ENCODE measurements at regions of chr17 and their contacts with region 1.

Region 1: DNA sequence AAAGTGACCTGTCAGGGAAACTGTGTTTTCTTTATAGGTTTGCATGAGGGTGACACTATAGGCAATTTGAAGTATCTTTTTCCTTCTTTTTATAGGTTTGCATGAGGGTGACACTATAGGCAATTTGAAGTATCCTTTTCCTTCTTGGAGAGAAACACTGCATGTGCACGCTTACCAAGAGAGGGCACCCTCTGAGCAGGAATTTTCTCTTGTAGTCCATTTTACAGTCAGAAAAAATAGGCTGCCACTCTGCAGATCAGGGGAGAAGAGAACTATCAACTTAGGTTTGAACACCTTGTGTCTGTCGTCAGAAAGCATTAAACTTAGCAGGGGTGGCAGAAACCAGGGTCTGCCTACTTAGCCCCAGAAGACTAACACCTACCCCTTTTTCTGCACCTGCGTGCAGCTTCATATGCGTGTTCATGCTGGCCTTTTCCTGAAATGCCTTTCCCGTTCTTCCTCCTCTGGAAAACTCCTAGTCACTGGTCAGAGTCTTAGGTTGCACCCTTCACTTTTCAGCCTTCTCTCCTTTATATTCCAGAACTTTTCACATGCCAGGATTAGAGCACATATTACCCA is 16.4 kb upstream of the SMIM36 start:
- DNase-seq: peak; percentile 18 to 24
- ATAC-seq: peak; percentile 57 to 66
- H3K4me3 ChIP-seq: no peak overlapping the region
- H3K27ac ChIP-seq: no peak overlapping the region
- H3K4me1 ChIP-seq: no peaks in the 10 kb centered on the region
- H3K27me3 ChIP-seq: no peaks in the 10 kb centered on the region
- CTCF ChIP-seq: peak; percentile 15 to 56 (median 51)
- POLR2A ChIP-seq: no peak

Region 2: DNA sequence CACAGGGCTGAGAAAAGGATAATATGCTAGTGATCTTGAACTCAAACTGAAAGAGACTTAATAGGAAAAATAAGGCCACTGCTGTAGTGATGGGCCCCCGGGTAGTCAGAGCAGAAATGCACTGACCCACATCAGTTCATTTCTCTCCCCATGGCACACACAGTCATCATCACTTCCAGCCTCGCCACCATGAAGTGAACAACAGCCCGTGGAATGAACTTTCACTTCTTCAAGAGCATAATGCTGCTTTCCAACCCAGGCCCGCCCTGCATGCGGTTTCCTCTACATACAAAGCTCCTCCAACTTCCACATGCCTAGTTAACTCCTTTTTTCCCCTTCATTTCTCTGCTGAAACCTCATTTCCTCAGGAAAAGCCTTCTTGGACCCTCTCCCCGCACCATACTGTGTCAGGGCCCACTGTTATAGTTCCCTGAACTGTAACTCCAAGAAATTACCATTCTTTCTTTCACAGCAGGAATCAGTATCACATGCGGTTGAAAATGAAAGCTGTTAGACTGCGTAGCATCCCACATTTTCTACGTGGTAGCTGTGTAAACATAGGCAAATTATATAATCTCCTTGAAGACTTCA is 49.5 kb after region 1 on chr17:
- in situ Hi-C with region 1: no loop called
- intact Hi-C with region 1: no loop called
- DNase-seq: peak; percentile 6 to 29
- ATAC-seq: peak; percentile 56 to 61
- H3K4me3 ChIP-seq: peak overlapping the region; percentile 36 to 42 (median 40)
- H3K27ac ChIP-seq: peak overlapping the region; percentile 56 to 72 (median 62)
- H3K4me1 ChIP-seq: peaks cover 0 to 5% of the 10 kb centered on the region in 2 donors
- H3K27me3 ChIP-seq: no peaks in the 10 kb centered on the region
- CTCF ChIP-seq: no peak
- POLR2A ChIP-seq: no peak

Region 3: DNA sequence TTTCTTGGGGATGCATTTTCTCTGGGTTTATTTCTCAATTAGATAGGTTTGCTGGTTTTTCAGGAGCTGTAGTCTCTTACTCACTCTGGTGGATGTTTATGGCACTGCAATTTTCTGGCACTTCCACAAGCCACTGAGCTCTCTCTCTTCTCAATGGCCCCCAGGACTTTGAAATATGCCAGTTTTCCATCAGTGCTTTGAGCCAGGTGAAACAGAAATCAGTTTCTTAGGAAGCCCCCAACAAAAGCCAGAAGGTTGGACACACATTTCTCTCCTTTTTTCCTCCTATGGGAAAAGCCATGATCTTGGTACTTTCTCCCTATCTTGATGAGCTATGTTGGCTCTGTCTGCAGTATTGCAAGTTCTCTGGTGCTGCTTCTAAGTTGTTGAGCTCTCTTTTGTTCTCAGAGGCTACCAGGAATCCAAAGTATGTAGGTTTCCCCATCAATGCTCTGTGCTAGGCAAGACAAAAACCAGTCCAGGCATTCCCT is 74.3 kb after region 1 on chr17:
- in situ Hi-C with region 1: loop called in 1 of 4 experiments (anchors 5 kb)
- intact Hi-C with region 1: loop called (anchors 5 kb)
- DNase-seq: no peak
- ATAC-seq: no peak
- H3K4me3 ChIP-seq: no peak overlapping the region
- H3K27ac ChIP-seq: no peak overlapping the region
- H3K4me1 ChIP-seq: peaks cover 0 to 6% of the 10 kb centered on the region in 2 donors
- H3K27me3 ChIP-seq: no peaks in the 10 kb centered on the region
- CTCF ChIP-seq: peak in 4 of 5 experiments; percentile 27 to 54 (median 36)
- POLR2A ChIP-seq: no peak

Region 4: DNA sequence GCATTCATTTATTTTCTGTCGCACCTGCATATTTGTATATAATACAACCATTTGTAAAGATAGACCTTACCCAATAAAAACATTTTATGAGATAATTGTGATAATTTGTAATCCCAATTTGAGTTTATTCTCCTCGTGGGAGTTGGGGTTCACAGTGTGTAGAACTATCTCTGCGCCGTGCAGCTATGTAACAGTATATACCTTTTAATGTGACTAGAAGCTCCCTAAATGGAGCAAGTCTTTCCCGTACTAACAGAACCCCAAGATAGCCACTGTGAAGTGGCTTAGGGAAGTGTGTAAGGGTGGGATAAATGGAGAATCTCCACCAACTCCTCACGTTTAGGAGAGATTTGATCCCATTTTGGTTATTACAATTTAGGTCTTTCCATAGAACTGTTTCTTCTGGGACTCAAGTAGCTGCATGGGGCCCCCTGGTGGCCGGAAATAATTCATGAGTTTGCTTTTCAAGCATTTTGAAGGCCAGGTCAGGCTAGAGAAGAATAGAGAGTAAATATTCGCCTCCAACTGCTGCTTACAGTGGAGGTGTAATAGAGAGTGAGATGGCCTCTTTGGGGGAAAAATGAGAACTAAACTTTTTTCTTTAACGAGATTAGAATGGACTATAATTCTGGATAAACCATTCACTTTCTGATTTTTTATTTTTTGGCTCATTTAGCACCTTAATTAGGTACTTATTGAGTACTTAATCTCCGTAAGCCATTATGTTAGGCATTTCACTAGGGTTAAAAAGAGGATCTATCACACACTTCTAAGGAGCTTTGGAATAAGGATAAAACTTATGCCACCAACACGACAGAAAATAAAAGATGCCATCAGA is 190.5 kb after region 1 on chr17:
- in situ Hi-C with region 1: loop called (anchors 5 kb)
- intact Hi-C with region 1: loop called (anchors 1 kb)
- DNase-seq: peak; percentile 51 to 78
- ATAC-seq: peak; percentile 58 to 64
- H3K4me3 ChIP-seq: no peak overlapping the region
- H3K27ac ChIP-seq: no peak overlapping the region
- H3K4me1 ChIP-seq: peaks cover 5 to 7% of the 10 kb centered on the region in 2 donors
- H3K27me3 ChIP-seq: no peaks in the 10 kb centered on the region
- CTCF ChIP-seq: peak; percentile 52 to 91 (median 81)
- POLR2A ChIP-seq: no peak

Region 5: GRCh38 chr17:55825213-55825612 is 297.6 kb after region 1 on chr17:
- in situ Hi-C with region 1: loop called in 1 of 4 experiments (anchors 5 kb)
- intact Hi-C with region 1: loop called (anchors 1 kb)
- DNase-seq: no peak
- ATAC-seq: peak in 1 of 2 donors; percentile 66
- H3K4me3 ChIP-seq: no peak overlapping the region
- H3K27ac ChIP-seq: no peak overlapping the region
- H3K4me1 ChIP-seq: no peaks in the 10 kb centered on the region
- H3K27me3 ChIP-seq: no peaks in the 10 kb centered on the region
- CTCF ChIP-seq: peak in 4 of 5 experiments; percentile 16 to 61 (median 47)
- POLR2A ChIP-seq: no peak

Region 6: GRCh38 chr17:56441331-56441730 is 913.7 kb after region 1 on chr17:
- in situ Hi-C with region 1: no loop called
- intact Hi-C with region 1: no loop called
- DNase-seq: no peak
- ATAC-seq: no peak
- H3K4me3 ChIP-seq: no peak overlapping the region
- H3K27ac ChIP-seq: no peak overlapping the region
- H3K4me1 ChIP-seq: no peaks in the 10 kb centered on the region
- H3K27me3 ChIP-seq: no peaks in the 10 kb centered on the region
- CTCF ChIP-seq: no peak
- POLR2A ChIP-seq: no peak

Region 7: DNA sequence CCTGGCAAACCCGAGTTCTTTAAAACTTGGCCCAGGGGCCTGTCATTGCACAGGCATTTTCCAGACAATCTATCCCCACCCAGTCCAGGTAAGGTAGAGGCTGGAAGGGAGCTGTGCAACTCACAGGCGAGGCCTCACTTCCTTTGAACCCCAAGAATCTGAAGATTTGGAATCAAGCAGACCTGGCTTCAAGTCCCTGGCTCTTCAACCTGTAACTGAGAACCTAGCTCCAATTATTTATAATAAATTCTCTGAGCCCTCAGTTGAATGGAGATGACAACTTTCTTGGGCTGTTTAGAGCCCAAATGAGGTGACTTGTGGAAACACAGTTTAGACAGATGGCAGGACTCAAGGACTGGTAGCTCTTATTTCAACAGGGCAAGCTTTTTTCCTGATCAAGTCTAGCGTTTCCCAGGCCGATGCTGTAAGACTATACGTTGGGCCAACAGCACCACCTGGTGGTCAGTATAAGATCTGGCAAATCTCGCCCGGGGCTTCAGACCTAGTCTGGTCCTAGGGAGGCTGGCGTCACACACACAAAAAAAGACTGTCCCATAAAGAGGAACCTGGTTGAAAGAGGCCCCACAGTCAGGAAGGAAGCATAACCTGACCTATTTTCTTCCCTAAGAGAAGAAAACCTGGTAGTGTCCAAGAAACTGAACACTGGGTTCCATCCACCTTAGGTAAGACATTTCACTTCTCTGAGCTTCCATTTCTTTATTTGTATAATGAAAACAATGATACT is 1188.2 kb after region 1 on chr17:
- in situ Hi-C with region 1: no loop called
- intact Hi-C with region 1: loop called (anchors 10 kb)
- DNase-seq: peak; percentile 55 to 68
- ATAC-seq: peak; percentile 89 to 98
- H3K4me3 ChIP-seq: no peak overlapping the region
- H3K27ac ChIP-seq: no peak overlapping the region
- H3K4me1 ChIP-seq: no peaks in the 10 kb centered on the region
- H3K27me3 ChIP-seq: no peaks in the 10 kb centered on the region
- CTCF ChIP-seq: peak; percentile 69 to 87 (median 84)
- POLR2A ChIP-seq: no peak